ENCODE measurements at regions of chr14 and their contacts with region 1.

Region 1: DNA sequence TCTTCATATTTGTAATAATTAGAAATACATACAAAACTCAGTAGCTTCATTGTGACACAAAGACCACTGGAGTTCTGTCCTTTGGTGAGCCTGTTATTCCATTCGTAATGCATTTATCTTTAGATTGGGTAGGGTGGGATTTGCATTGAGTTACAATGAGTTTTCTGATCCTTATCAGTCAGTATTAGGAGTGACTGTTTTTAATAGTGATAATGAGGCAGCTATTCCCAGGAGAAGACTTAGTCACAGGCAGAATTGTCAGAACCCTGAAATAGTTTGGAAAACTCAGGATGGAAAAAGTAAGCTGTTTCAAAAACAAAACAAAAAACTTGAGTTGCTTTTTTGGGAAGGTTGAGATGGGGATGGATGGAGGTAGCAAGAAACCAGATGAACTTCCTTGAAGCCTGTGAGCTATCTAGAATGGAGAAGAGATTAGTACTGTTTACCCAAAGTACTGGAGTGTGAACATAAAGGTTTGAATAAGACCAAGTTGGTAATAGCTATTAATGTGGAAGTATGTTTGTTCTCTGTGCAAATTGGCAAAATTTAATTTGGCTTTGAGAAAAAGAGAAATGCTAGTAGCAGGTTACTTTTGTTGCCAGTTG is 38.6 kb downstream of the FBXO34 start:
- DNase-seq: no peak
- ATAC-seq: peak in 4 of 8 donors; percentile 28 to 63 (median 42)
- H3K4me3 ChIP-seq: no peak overlapping the region
- H3K27ac ChIP-seq: peak overlapping the region in 4 of 10 donors; percentile 3 to 30 (median 10)
- H3K4me1 ChIP-seq: peaks cover 0 to 55% (median 39%) of the 10 kb centered on the region in 9 donors
- H3K27me3 ChIP-seq: no peaks in the 10 kb centered on the region
- CTCF ChIP-seq: no peak

Region 2: GRCh38 chr14:55221186-55221585 is 88.7 kb before region 1 on chr14:
- intact Hi-C with region 1: no loop called
- DNase-seq: no peak
- ATAC-seq: no peak
- H3K4me3 ChIP-seq: no peak overlapping the region
- H3K27ac ChIP-seq: no peak overlapping the region
- H3K4me1 ChIP-seq: no peaks in the 10 kb centered on the region
- H3K27me3 ChIP-seq: no peaks in the 10 kb centered on the region
- CTCF ChIP-seq: no peak

Region 3: DNA sequence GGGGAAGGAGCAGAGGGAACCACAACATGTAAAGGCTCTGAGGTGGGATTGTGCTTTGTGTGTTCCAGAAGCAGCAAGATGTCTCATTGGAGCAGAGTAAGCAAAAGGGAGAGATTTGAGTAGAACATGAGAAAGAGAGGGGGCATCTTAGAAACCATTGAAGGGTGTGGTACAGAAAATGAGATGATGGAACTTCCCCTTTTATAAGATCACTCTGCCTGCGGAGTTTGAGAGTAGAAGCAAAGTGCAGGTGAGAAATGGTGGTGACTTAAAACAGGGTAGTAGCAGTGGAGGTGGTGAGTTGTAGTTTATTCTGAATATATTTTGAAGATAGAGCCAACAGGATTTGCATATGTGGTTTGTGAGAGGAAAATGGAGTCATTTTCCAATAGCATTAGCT is 17.3 kb after region 1 on chr14:
- intact Hi-C with region 1: loop called in 1 of 10 experiments (anchors 2 kb)
- DNase-seq: no peak
- ATAC-seq: no peak
- H3K4me3 ChIP-seq: no peak overlapping the region
- H3K27ac ChIP-seq: no peak overlapping the region
- H3K4me1 ChIP-seq: peaks cover 5 to 50% (median 20%) of the 10 kb centered on the region in 9 donors
- H3K27me3 ChIP-seq: no peaks in the 10 kb centered on the region
- CTCF ChIP-seq: no peak

Region 4: DNA sequence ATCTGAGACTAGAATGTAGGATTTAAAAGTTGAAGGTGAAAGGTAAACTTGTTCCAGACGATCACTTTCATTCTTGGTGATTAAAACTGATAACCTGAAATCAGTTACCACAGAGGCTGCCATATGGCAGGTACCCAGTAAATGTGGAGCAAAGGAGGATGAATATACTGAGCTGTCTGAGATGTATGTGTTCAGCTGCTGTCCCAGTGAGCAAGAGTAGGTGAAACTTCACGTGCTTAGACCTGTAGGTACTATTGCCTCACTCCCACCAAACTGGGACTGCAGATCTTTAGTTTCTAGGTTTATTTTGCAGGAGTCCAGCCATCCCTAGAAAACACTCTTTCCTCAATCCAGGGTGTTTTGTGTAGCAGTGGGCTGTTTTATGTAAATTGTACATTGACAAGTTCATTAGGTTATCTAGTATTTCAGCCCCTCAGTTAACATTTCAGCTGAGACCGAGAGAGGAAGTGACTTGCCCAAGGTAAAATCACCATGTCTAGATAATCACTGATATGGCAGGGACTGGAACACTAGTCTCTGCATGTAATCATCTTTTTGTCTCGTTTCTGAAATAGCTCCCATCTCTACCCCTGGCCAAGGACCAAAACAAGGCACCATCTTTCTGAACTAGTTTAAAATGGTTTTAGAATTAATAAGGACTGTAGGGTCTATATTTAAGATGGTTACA is 39.0 kb after region 1 on chr14:
- intact Hi-C with region 1: loop called in 1 of 10 experiments (anchors 5 kb)
- DNase-seq: no peak
- ATAC-seq: no peak
- H3K4me3 ChIP-seq: no peak overlapping the region
- H3K27ac ChIP-seq: no peak overlapping the region
- H3K4me1 ChIP-seq: peaks cover 0 to 49% (median 21%) of the 10 kb centered on the region in 9 donors
- H3K27me3 ChIP-seq: no peaks in the 10 kb centered on the region
- CTCF ChIP-seq: no peak

Measured in heart right ventricle (tissue), 16 donors.